Dorsolateral prefrontal cortex (tissue), 120 donors: ENCODE measurements at regions of chr13 and their contacts with region 1.

Region 1: DNA sequence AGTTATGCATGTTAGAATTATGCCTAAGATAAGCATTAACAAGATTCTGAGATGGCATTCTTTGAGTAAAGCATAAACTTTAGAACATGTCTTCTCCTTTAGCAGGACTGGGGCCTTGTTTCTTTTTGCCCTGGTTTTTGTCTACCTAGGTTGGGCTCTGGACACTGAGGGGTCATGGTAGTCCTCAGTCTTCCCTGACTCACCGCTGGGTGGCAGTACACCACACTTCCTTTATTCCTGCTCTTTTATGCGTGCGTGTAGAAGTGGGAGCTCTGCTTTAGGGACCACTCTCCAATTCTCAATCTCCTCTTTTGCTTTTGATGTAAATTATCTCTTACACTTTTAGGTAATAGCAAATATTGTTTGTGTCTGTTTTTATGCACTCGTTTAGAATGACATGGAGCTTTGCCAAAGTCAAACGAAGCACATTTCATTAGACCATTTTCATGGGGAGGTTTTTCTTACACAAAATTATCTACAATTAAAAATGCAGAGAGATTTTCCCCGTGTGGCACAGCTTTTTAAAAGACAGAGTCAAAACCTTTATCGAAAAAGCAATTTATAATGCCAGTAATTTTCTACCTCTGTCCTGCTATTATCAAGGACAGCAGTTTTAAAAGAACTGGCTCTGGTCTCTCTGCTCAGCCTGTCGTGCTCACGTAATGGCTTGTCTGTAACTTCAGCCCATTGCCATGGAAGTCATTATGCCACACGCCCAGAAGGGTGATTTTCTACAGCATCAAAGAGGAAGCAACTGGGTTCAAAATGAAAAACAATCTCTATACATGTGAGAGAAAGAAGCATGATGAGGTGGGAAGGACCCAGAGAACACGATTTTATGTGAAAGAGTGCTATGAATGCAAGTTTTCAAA is 413.9 kb downstream of the COG6 start:
- DNase-seq: peak; percentile 37 to 85 (median 74)
- H3K4me3 ChIP-seq: peak overlapping the region in 37 of 59 donors; percentile 3 to 52 (median 32)
- H3K27ac ChIP-seq: peak overlapping the region in 28 of 59 donors; percentile 3 to 69 (median 34)
- H3K27me3 ChIP-seq: no peaks in the 10 kb centered on the region
- CTCF ChIP-seq: peak; percentile 70 to 96 (median 88)

Region 2: DNA sequence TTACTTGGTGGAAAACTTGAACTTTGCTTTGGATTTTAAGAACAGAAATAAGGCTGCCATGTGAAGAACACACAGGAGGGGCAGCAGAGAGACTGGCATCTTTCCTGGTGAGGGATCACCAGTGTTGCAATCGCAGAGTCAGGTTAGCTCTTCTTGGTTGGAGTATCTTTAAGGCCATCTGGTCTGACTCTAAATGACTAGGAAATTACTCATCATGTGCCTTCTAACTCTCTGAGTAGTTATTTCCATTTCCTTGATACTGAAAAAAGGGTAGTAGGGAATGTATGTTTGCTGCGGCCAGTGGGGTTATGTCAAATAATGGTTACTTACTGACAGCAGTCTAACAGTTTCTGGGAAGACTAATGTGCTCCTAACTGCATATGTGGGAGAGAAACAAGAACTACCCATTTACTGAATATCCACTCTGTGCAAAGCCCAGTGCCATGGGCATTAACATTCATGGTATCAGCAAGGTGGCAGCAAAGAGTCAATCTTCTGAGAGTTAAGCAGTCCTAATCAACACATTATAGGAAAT is 291.8 kb before region 1 on chr13:
- intact Hi-C with region 1: loop called in 1 of 2 experiments (anchors 10 kb)
- DNase-seq: no peak
- H3K4me3 ChIP-seq: no peak overlapping the region
- H3K27ac ChIP-seq: no peak overlapping the region
- H3K27me3 ChIP-seq: no peaks in the 10 kb centered on the region
- CTCF ChIP-seq: peak in 43 of 56 donors; percentile 18 to 62 (median 35)

Region 3: DNA sequence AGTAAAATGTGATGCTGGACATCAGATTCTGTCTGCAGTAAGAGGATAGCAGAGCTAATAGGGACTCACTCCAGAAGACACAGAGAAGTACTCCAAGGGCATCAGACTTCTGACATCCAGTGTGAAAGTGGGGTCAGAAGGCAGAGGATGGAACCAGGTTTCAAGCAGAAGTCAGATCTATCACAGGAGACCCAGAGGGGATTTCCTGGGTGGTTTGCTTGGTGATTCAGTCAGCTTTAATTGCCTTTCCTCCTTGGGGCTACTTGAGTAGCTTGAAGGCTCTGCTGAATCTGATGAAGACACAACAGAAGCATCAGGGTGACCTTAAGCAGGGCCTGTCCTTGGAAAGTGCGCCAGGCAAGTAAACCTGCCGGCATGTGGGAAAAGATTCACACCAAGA is 113.4 kb before region 1 on chr13:
- intact Hi-C with region 1: no loop called
- DNase-seq: no peak
- H3K4me3 ChIP-seq: no peak overlapping the region
- H3K27ac ChIP-seq: no peak overlapping the region
- H3K27me3 ChIP-seq: no peaks in the 10 kb centered on the region
- CTCF ChIP-seq: no peak

Region 4: DNA sequence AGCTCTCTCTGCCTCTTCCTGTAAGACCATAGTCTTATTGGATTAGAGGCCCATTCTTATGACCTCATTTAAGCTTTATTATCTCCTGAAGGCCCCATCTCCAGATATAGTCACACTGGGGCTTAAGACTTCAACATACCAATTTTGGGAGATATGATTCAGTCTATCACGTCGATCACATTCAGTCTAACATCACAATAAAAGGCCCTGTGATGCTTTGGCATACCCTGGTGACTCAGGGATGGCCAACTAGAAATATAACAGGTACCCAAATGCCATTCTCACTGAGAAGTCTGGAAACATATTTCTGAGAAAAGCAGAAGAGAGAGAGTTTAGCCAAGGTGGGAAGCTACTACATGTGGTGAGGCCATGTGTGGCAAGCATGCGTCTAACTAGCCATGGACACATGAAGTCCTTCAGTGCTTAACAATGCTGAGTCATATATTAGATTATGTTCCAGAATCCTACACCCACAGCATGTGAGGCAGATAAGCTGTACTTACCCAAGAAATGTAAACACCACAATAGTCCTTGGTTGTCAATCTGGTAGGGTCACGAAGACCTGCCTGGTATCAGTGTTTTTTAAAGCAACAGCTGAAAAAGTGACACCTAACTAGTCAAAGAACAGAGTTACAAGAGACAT is 111.9 kb after region 1 on chr13:
- intact Hi-C with region 1: loop called in 1 of 2 experiments (anchors 10 kb)
- DNase-seq: no peak
- H3K4me3 ChIP-seq: no peak overlapping the region
- H3K27ac ChIP-seq: no peak overlapping the region
- H3K27me3 ChIP-seq: no peaks in the 10 kb centered on the region
- CTCF ChIP-seq: no peak

Region 5: DNA sequence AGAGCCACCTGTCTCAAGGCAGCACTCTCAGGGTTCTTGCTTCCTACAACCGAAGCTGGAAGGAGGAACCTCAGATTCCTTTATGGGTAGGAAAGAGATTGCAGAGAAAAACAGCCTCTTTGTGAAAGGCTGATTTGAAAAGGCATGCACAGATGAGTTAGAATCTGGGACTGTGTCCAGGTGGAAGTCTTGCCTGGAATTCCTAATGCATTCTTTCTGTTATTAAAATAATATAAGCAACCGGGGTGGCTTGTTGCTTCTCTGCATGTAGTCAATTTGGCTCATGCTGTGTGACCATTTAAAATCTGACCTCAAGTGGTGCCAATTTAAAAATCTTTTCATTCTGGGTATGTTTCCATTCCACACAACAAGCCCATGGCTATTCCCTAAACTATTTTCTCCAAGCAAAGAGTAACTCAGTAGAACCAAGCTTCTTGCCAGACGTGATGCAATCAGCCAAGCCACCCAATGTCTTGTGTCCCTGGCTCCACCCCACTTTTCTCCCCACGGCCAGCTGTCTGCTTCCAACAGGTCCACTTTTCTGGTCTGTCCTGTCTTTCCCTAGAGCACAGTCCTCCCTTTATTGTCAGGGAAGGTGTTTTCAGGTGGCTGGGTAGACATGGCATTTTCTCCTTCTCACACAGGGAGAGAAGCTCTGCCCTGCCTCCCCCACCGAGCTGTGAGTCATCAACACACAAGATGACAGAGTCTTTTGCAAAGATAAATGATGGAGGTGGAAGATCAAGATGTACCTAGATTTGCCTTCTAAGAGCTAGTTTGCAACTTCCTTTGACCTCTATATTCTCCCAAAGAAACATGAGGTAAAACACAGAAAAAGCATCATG is 202.7 kb after region 1 on chr13:
- intact Hi-C with region 1: loop called (anchors 5 to 10 kb)
- DNase-seq: peak in 6 of 10 donors; percentile 24 to 67 (median 54)
- H3K4me3 ChIP-seq: no peak overlapping the region
- H3K27ac ChIP-seq: peak overlapping the region; percentile 14 to 89 (median 77)
- H3K27me3 ChIP-seq: no peaks in the 10 kb centered on the region
- CTCF ChIP-seq: no peak

Region 6: GRCh38 chr13:40306817-40307216 is 237.4 kb after region 1 on chr13:
- intact Hi-C with region 1: no loop called
- DNase-seq: no peak
- H3K4me3 ChIP-seq: no peak overlapping the region
- H3K27ac ChIP-seq: no peak overlapping the region
- H3K27me3 ChIP-seq: peaks cover 0 to 5% (median 0%) of the 10 kb centered on the region in 45 donors
- CTCF ChIP-seq: no peak

Region 7: GRCh38 chr13:40485611-40486517 is 416.5 kb after region 1 on chr13:
- intact Hi-C with region 1: loop called in 1 of 2 experiments (anchors 10 kb)
- DNase-seq: no peak
- H3K4me3 ChIP-seq: no peak overlapping the region
- H3K27ac ChIP-seq: no peak overlapping the region
- H3K27me3 ChIP-seq: no peaks in the 10 kb centered on the region
- CTCF ChIP-seq: no peak

Region 8: GRCh38 chr13:40682449-40683240 is 613.2 kb after region 1 on chr13:
- intact Hi-C with region 1: loop called (anchors 2 to 5 kb)
- DNase-seq: no peak
- H3K4me3 ChIP-seq: peak overlapping the region in 1 of 59 donors; percentile 4
- H3K27ac ChIP-seq: no peak overlapping the region
- H3K27me3 ChIP-seq: no peaks in the 10 kb centered on the region
- CTCF ChIP-seq: peak; percentile 61 to 95 (median 78)